GM13976 (cell line): ENCODE measurements at regions of chr11 and their contacts with region 1.

Region 1: GRCh38 chr11:104134751-104135479 is 29.0 kb downstream of the PDGFD start:
- DNase-seq: no peak
- CTCF ChIP-seq: no peak

Region 2: GRCh38 chr11:103682318-103683184 is 452.4 kb before region 1 on chr11:
- in situ Hi-C with region 1: loop called (anchors 25 kb)
- DNase-seq: peak; percentile 27
- CTCF ChIP-seq: peak; percentile 75

Region 3: DNA sequence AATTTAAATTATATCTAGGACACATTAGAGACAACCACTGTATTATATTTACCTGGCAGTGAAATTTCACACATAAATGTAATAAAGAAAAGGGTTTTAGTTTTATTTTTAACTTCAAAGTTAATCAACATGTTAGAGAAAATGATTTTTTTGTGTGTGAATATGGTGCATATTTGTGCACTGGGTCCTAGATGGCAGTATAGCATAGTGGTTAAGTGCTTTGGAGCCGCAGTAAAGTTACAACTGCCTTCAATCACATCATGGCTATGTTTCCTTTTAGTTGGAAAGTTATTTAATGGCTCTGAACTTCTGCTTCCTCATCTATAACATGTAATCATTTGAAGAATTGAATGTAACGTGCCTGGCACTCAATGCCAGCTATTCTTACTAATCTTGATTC is 207.4 kb before region 1 on chr11:
- in situ Hi-C with region 1: loop called (anchors 25 kb)
- DNase-seq: no peak
- CTCF ChIP-seq: peak; percentile 33

Region 4: GRCh38 chr11:104370478-104370877 is 235.6 kb after region 1 on chr11:
- in situ Hi-C with region 1: no loop called
- DNase-seq: no peak
- CTCF ChIP-seq: no peak